HEK293 (cell line): ENCODE measurements at regions of chr19 and their contacts with region 1.

Region 1: DNA sequence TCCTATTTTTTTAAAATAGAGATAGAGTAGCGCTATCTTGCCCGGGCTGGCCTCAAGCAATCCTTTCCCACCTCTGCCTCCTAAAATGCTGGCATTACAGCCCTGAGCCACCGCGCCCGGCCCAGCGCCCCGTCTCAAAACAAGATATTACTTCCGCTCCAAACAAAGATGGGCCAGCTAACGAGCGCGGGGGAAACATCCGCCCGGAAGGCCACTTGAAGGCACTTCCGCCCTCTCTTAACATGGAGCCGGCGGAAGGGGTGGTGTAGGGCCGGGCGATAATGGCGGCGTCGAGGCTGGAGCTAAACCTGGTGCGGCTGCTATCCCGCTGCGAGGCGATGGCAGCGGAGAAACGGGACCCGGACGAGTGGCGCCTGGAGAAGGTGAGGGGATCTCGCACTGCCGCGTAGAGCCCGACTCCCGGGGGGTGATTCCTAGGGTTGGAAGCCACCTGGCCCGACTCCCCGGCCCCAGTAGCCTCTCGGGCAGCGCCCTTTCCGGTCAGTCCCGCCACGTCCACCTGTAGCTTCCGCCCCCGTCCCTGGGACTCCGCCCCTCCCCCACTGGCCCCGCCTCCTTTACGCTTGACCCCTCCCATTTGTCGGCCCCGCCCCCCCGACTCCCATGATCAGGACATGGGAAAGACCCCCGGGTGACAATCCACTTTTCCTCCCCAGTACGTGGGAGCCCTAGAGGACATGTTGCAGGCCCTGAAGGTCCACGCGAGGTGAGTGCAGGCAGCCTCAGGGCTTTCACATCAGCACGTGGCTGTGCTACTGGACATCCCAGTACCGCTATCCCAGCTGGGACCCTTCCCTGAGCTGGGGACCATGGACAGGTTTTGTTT is at the start of gene USE1:
- H3K4me3 ChIP-seq: peak within 1 kb of the TSS; percentile 91
- H3K27ac ChIP-seq: peak within 1 kb of the TSS; percentile 63
- H3K4me1 ChIP-seq: no peaks in the 10 kb centered on the region
- CTCF ChIP-seq: peak; percentile 16; the same call in 1 of the 2 replicates

Region 2: GRCh38 chr19:17226002-17226933 is 10.9 kb after region 1 on chr19 and contains the start of gene OCEL1:
- CTCF ChIA-PET with region 1: no interaction called
- POLR2A ChIA-PET with region 1: interaction called, 61 read pairs
- H3K4me3 ChIP-seq: peak within 1 kb of the TSS; percentile 76
- H3K27ac ChIP-seq: peak within 1 kb of the TSS; percentile 47; the same call in 1 of the 2 replicates
- H3K4me1 ChIP-seq: no peaks in the 10 kb centered on the region
- CTCF ChIP-seq: no peak; the same call in 1 of the 2 replicates

Region 3: GRCh38 chr19:17235618-17236377 is 20.4 kb after region 1 on chr19:
- CTCF ChIA-PET with region 1: no interaction called
- POLR2A ChIA-PET with region 1: interaction called, 61 read pairs
- H3K4me3 ChIP-seq: peak overlapping the region; percentile 55
- H3K27ac ChIP-seq: peak overlapping the region; percentile 69
- H3K4me1 ChIP-seq: peaks cover 11% of the 10 kb centered on the region
- CTCF ChIP-seq: peak; percentile 65; the same call in 1 of the 2 replicates

Region 4: DNA sequence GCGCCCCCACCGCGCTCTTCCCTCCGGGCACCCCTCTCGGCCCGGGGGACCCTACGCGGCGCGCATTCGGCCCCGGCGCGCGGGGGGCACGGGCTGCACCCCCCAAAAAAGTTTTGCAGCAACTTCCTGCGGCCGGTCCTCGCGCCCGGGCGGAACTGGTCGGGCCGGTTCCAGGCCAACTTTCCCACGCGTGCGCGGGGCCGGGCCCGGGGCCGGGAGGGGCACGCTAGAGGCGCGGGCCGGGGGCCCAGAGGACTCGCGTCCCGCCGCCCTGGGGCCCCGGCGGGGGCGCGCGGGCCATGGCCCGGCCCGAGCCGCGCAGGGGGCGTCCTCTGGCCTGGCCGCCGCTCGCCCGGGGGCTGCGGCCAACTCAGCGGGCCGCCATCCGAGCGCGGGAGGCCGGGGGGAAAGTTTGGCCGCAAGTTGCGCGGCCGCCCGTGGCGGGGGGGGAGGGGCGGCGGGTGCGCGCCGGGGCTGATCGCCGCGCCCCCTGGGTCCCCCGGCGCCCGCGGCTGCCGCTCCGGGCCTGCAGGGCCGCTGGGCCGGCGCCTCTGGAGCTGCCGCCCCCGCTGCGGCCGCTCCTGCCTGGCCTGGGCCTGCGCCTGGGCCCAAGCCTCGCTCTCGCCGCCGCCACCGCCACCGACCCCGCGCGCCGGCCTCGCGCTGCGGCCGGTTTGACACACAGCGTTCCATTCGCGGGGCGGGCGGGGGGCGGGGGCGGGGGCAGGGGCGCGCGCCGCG is 30.1 kb after region 1 on chr19 and contains the start of gene NR2F6:
- CTCF ChIA-PET with region 1: interaction called, 4 read pairs
- POLR2A ChIA-PET with region 1: interaction called, 14 read pairs
- H3K4me3 ChIP-seq: peak within 1 kb of the TSS; percentile 76
- H3K27ac ChIP-seq: peak within 1 kb of the TSS; percentile 82; the same call in 1 of the 2 replicates
- H3K4me1 ChIP-seq: peaks cover 10% of the 10 kb centered on the region
- CTCF ChIP-seq: no peak

Region 5: DNA sequence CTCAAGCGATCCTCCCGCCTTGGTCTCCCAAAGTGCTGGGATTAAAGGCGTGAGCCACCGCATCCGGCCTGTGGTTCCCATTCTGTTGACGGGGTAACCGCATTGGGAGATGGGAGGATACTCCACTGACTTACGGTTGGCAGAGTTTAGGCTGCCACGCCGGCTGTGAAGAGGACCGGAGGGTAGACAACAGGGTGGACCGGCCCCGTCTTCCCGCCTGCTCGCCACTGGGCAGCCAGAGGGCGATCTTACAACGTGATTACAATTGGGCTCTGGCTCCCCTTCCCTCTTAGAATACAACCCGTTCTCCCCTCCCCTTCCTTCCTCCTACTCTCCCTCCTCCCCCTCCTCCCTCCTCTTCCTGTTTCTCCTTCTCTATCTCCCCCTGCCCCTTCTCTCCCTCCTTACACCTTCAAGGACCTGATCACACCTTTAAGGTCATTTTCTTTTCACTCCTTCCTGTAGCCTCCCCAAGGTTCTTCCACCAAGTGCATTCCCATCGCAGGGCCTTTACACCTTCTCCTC is 179.6 kb after region 1 on chr19:
- CTCF ChIA-PET with region 1: no interaction called
- POLR2A ChIA-PET with region 1: no interaction called
- H3K4me3 ChIP-seq: no peak overlapping the region
- H3K27ac ChIP-seq: no peak overlapping the region
- H3K4me1 ChIP-seq: peaks cover 3% of the 10 kb centered on the region; the same call in 1 of the 2 replicates
- CTCF ChIP-seq: peak; percentile 91